WTC11 (cell line): ENCODE measurements at regions of chr3 and their contacts with region 1.

Region 1: DNA sequence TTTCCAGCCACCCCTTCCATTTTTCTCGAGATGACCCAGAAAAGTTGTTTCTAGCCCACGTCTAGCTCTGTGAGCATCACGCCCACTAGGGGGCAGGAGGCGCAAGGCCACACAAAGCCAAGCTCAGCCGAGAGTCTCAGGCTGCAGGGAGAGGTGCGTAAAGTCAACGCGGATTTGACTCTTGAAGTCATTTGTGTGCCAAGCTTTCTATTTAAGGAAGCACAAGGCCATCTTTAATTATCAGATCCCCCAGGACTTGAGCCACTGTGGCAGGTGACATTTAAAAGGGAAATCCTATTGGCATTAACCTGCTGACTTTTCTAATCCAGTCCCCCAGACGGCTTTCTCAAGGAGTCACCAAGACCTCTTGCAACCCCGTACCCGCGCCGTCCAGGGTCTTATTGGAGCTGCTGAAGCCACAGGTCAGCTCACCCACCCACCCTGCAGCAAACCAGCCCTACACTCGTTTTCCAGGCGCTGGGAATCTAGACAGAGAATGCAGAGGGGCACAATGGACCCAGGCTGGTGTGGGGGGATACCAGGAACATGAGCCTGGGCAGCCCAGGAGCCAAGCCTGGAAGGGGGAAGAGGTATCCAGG is 62.1 kb downstream of the CAPN7 start:
- DNase-seq: peak; percentile 84
- ATAC-seq: peak; percentile 87
- H3K4me3 Mint-ChIP-seq: no peak overlapping the region
- H3K27ac Mint-ChIP-seq: no peak overlapping the region
- H3K4me1 Mint-ChIP-seq: no peaks in the 10 kb centered on the region
- H3K27me3 Mint-ChIP-seq: no peaks in the 10 kb centered on the region; the same call in 1 of the 2 replicates
- CTCF ChIP-seq: peak; percentile 84

Region 2: GRCh38 chr3:15113463-15113862 is 154.7 kb before region 1 on chr3:
- CTCF ChIA-PET with region 1: interaction called, 17 read pairs
- POLR2A ChIA-PET with region 1: no interaction called
- DNase-seq: no peak
- ATAC-seq: no peak
- H3K4me3 Mint-ChIP-seq: no peak overlapping the region
- H3K27ac Mint-ChIP-seq: no peak overlapping the region
- H3K4me1 Mint-ChIP-seq: peaks cover 25% of the 10 kb centered on the region
- H3K27me3 Mint-ChIP-seq: peaks cover 17% of the 10 kb centered on the region
- CTCF ChIP-seq: no peak

Region 3: GRCh38 chr3:15284121-15284889 is 16.2 kb after region 1 on chr3:
- CTCF ChIA-PET with region 1: interaction called, 55 read pairs
- POLR2A ChIA-PET with region 1: no interaction called
- DNase-seq: no peak
- ATAC-seq: no peak
- H3K4me3 Mint-ChIP-seq: no peak overlapping the region
- H3K27ac Mint-ChIP-seq: no peak overlapping the region
- H3K4me1 Mint-ChIP-seq: peaks cover 16% of the 10 kb centered on the region
- H3K27me3 Mint-ChIP-seq: no peaks in the 10 kb centered on the region
- CTCF ChIP-seq: no peak

Region 4: GRCh38 chr3:15377961-15378791 is 110.0 kb after region 1 on chr3:
- CTCF ChIA-PET with region 1: interaction called, 31 read pairs
- POLR2A ChIA-PET with region 1: no interaction called
- DNase-seq: peak; percentile 93
- ATAC-seq: peak; percentile 98
- H3K4me3 Mint-ChIP-seq: peak overlapping the region; percentile 47
- H3K27ac Mint-ChIP-seq: peak overlapping the region; percentile 57; the same call in 1 of the 2 replicates
- H3K4me1 Mint-ChIP-seq: peaks cover 5% of the 10 kb centered on the region; the same call in 1 of the 2 replicates
- H3K27me3 Mint-ChIP-seq: peaks cover 2% of the 10 kb centered on the region; the same call in 1 of the 2 replicates
- CTCF ChIP-seq: peak; percentile 68